ENCODE measurements at regions of chr5 and their contacts with region 1.

Region 1: GRCh38 chr5:173057062-173057924 is 1.1 kb downstream of the CREBRF start:
- DNase-seq: peak; percentile 98
- H3K4me3 Mint-ChIP-seq: peak overlapping the region; percentile 88
- H3K27ac Mint-ChIP-seq: peak overlapping the region; percentile 90
- H3K4me1 Mint-ChIP-seq: peaks cover 17% of the 10 kb centered on the region
- H3K27me3 Mint-ChIP-seq: peaks cover 2% of the 10 kb centered on the region

Region 2: DNA sequence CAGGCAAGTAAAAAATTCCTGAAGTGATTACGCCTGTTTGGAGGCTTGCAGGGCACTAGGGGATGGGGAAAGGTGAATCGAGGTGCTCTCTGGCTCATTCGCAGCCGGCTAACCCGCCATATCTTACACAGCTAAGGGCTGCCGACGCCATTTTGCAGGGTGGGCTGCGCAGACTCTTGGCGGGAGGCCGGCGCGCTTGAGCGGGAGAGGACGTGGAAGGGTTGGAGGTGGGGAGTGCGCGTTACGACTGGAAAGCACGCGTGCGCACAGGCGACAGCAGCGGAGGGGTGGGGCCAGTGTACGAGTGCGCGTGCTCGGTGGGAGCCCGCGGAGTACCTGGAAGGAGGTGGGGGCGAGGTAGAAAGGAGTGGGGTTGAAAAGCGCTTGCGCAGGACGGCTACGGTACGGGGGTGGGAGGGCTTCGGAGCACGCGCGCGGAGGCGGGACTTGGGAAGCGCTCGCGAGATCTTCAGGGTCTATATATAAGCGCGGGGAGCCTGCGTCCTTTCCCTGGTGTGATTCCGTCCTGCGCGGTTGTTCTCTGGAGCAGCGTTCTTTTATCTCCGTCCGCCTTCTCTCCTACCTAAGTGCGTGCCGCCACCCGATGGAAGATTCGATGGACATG is 1669.8 kb before region 1 on chr5 and contains the start of gene NPM1:
- intact Hi-C with region 1: loop called (anchors 5 kb)
- DNase-seq: peak; percentile 97
- H3K4me3 Mint-ChIP-seq: peak within 1 kb of the TSS; percentile 97
- H3K27ac Mint-ChIP-seq: peak within 1 kb of the TSS; percentile 98
- H3K4me1 Mint-ChIP-seq: peaks cover 43% of the 10 kb centered on the region
- H3K27me3 Mint-ChIP-seq: peaks cover 8% of the 10 kb centered on the region
- total RNA-seq, gene NPM1: 2,729 and 2,809 TPM in 2 replicates

Region 3: DNA sequence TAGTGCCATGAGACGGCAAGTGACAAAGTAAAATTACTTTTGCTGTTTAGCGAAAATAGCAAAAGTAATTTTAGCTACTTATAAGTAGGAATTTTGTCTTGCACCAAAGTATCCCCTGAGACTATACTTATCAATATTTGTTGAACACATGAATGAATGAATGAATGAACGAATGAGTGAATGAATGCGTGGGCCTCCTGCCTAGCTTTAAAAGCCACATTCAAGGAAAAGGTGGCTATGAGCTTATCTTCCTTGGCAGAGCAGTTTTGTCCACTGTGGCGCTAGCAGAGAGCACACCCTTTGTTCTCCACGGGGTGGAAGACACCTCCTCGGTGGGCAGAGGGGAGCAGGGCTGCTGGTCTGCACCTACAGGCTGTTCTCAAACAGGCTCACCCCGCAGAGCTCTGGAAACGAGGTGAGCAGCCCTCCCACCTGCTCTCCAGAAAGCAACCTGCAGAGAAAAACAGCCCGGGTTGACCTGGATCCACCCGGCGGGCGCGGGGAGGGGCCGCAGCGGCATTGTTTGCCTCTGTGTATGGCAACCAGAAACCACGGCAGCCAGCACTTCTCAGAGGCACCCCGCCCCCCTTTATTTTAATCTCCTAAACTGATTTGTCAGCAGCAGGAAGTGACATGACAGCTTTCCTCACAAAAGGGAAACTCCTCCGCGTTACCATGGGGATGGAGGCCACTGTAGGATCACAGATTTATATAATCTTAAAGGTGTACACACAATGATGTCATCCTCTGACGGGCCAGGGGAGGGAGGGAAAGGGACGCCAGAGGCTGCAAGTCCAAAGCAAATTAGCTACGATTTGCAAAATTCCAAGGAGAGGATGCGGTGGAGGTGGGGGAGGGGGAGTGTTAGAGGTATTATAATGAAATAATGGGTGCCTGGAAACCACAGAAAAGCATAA is 292.2 kb before region 1 on chr5:
- intact Hi-C with region 1: loop called (anchors 1 kb)
- DNase-seq: peak; percentile 95
- H3K4me3 Mint-ChIP-seq: peak overlapping the region; percentile 76
- H3K27ac Mint-ChIP-seq: peak overlapping the region; percentile 87
- H3K4me1 Mint-ChIP-seq: peaks cover 38% of the 10 kb centered on the region
- H3K27me3 Mint-ChIP-seq: peaks cover 6% of the 10 kb centered on the region

Region 4: GRCh38 chr5:172816901-172817564 is 240.3 kb before region 1 on chr5:
- intact Hi-C with region 1: no loop called
- DNase-seq: no peak
- H3K4me3 Mint-ChIP-seq: no peak overlapping the region
- H3K27ac Mint-ChIP-seq: no peak overlapping the region
- H3K4me1 Mint-ChIP-seq: peaks cover 9% of the 10 kb centered on the region
- H3K27me3 Mint-ChIP-seq: peaks cover 12% of the 10 kb centered on the region

Region 5: GRCh38 chr5:172833686-172834414 is 223.4 kb before region 1 on chr5 and contains the start of gene ERGIC1:
- intact Hi-C with region 1: loop called (anchors 2 kb)
- DNase-seq: peak; percentile 79
- H3K4me3 Mint-ChIP-seq: peak within 1 kb of the TSS; percentile 88
- H3K27ac Mint-ChIP-seq: peak within 1 kb of the TSS; percentile 85
- H3K4me1 Mint-ChIP-seq: peaks cover 19% of the 10 kb centered on the region
- H3K27me3 Mint-ChIP-seq: no peaks in the 10 kb centered on the region
- total RNA-seq, gene ERGIC1: 47.4 and 47.9 TPM in 2 replicates

Region 6: GRCh38 chr5:173035904-173036707 is 21.2 kb before region 1 on chr5:
- intact Hi-C with region 1: loop called (anchors 1 kb)
- DNase-seq: no peak
- H3K4me3 Mint-ChIP-seq: peak overlapping the region; percentile 77
- H3K27ac Mint-ChIP-seq: peak overlapping the region; percentile 92
- H3K4me1 Mint-ChIP-seq: peaks cover 54% of the 10 kb centered on the region
- H3K27me3 Mint-ChIP-seq: no peaks in the 10 kb centered on the region

Region 7: DNA sequence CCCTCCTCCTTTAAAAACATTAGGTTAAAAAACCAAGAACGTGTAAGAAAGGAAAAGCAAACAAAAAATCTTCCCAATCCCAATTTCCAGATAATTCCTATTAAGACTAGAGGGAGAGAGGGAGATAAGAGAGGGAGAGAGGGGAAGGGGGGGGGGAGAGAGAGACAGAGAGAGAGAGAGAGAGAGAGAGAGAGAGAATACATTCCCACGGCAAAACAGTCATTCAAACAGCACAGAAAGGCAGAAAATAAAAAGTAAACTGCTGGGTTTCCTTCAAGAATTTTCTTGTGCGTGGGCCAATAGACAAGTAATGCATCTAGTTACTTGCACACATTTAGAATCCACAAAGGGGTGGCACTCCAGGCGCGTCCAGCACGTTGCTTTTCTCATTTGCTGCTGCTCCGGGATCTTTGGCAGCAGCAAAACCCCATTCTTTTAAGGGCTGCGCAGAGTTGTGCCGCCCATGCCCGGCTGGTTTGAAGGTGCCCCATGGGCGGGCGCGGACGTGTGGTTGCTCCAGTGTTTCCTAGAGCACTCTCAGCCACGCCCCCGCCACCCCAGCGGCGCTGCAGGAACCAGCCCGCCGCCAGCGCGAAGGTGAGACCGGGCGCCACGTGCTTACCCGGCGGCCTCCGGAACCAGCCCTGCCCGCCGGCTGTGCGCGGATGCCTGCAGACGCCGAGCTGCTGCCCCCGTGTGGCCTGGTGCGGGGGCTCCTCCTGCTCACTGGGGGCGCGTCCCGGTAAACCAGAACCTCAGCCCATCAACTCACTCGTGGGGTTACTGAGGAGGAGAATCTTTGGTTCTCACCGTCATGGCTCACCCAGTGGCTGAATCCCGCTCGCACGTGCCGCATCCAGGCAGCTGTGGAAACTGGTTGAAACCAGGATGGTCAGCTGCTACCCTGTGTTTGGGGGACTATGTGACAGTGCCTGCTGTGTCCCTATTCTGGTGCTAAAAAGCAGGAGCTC is 226.3 kb after region 1 on chr5:
- intact Hi-C with region 1: loop called (anchors 2 kb)
- DNase-seq: peak; percentile 60
- H3K4me3 Mint-ChIP-seq: no peak overlapping the region
- H3K27ac Mint-ChIP-seq: no peak overlapping the region
- H3K4me1 Mint-ChIP-seq: no peaks in the 10 kb centered on the region
- H3K27me3 Mint-ChIP-seq: peaks cover 38% of the 10 kb centered on the region

Region 8: GRCh38 chr5:173887610-173888472 is 830.5 kb after region 1 on chr5 and contains the start of gene CPEB4:
- intact Hi-C with region 1: loop called (anchors 2 kb)
- DNase-seq: peak; percentile 96
- H3K4me3 Mint-ChIP-seq: peak within 1 kb of the TSS; percentile 91
- H3K27ac Mint-ChIP-seq: peak within 1 kb of the TSS; percentile 98
- H3K4me1 Mint-ChIP-seq: peaks cover 79% of the 10 kb centered on the region
- H3K27me3 Mint-ChIP-seq: no peaks in the 10 kb centered on the region
- total RNA-seq, gene CPEB4: 9.1 and 14.1 TPM in 2 replicates